ENCODE measurements at regions of chr5 and their contacts with region 1.

Region 1: DNA sequence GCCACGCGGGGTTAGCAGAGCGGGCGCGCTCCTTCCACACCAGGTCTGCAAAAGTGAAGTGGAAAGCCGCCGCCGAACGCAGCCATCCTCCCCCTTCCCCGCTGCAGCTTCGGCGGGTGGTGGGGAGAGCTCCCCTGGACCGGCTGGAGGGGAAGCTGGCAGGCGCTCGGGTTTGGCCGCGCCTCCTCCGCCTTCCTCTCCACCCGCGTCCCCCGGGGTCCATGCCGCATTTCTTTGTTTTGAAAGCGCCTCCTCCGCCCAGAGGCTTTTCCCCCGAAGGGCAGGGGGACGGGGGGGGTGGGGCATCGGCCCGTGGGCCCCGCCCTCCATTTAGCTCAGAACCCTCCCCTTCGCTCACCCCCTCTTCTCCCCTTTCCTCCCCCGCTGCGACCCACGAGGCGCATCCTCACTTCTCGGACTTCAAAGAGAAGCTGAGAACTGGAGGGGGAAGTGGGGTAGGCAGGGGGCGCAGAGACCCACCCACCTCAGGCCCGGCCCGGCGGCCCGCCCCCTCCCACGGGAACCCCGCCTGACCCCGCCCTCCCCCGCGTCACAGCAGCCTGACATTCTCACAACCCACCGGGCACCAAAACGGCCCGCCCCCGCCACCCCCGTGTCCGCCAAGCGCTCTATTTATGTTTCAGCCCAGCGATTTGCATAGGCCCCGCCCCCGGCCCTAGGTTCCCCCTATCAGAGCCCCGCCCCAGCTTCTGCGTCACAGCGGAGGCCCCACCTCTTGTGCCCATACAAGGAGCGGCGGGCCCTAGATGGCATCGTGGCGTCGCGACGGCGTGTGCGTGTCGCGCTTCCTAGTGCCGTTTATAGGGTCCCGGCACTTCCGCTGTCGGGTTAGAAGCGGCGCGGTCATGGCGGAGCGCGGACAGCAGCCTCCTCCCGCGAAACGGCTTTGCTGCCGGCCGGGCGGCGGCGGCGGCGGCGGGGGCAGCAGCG is at the start of gene ZSWIM6:
- DNase-seq: peak; percentile 93 to 100
- ATAC-seq: peak; percentile 63 to 74
- H3K4me3 ChIP-seq: peak within 1 kb of the TSS; percentile 95
- H3K27ac ChIP-seq: peak within 1 kb of the TSS; percentile 88 to 95
- H3K4me1 ChIP-seq: peaks cover 42% of the 10 kb centered on the region
- CTCF ChIP-seq: no peak
- EP300 ChIP-seq: no peak
- POLR2A ChIP-seq: peak; percentile 93
- RAD21 ChIP-seq: peak; percentile 1 to 30; a peak in 2 of 5 replicates
- polyA plus RNA-seq, gene ZSWIM6: 18.0 and 20.9 TPM in 2 replicates

Region 2: DNA sequence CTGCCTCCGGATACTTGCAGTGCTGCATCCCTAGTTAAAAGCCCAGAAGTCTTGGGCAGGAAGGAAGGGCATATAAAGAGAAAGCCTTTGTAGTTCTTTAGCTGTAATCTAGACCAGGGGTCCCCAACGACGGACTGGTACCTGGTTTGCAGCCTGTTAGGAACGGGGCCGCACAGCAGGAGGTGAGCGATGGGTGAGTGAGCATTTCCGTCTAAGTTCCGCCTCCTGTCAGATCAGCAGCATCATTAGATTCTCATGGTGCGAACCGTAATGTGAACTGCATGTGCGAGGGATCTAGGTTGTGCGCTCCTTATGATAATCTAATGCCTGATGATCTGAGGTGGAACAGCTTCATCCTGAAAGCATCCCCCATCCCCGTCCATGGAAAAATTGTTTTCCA is 167.8 kb before region 1 on chr5:
- CTCF ChIA-PET with region 1: interaction called, 12 read pairs
- POLR2A ChIA-PET with region 1: interaction called, 11 read pairs
- DNase-seq: no peak
- ATAC-seq: no peak
- H3K4me3 ChIP-seq: no peak overlapping the region; the same call in 2 of the 3 replicates
- H3K27ac ChIP-seq: peak overlapping the region in 1 of 2 experiments; percentile 95; a peak in 2 of 6 replicates
- H3K4me1 ChIP-seq: peaks cover 16% of the 10 kb centered on the region; the same call in 2 of the 3 replicates
- CTCF ChIP-seq: no peak
- EP300 ChIP-seq: no peak
- POLR2A ChIP-seq: no peak
- RAD21 ChIP-seq: no peak

Region 3: GRCh38 chr5:61301341-61302199 is 30.1 kb before region 1 on chr5:
- CTCF ChIA-PET with region 1: interaction called, 73 read pairs
- POLR2A ChIA-PET with region 1: interaction called, 124 read pairs
- DNase-seq: peak; percentile 90 to 96
- ATAC-seq: peak; percentile 84 to 87
- H3K4me3 ChIP-seq: peak overlapping the region; percentile 42
- H3K27ac ChIP-seq: peak overlapping the region; percentile 77 to 88
- H3K4me1 ChIP-seq: peaks cover 67% of the 10 kb centered on the region
- CTCF ChIP-seq: no peak
- EP300 ChIP-seq: peak; percentile 48 to 71; a peak in 2 of 5 replicates
- POLR2A ChIP-seq: no peak
- RAD21 ChIP-seq: no peak; a peak in 4 of 5 replicates

Region 4: GRCh38 chr5:61313960-61314681 is 17.6 kb before region 1 on chr5:
- CTCF ChIA-PET with region 1: interaction called, 14 read pairs
- POLR2A ChIA-PET with region 1: interaction called, 31 read pairs
- DNase-seq: peak in 1 of 2 experiments; percentile 80
- ATAC-seq: peak; percentile 79 to 82
- H3K4me3 ChIP-seq: no peak overlapping the region
- H3K27ac ChIP-seq: peak overlapping the region; percentile 59 to 68
- H3K4me1 ChIP-seq: peaks cover 49% of the 10 kb centered on the region
- CTCF ChIP-seq: no peak
- EP300 ChIP-seq: peak; percentile 50 to 69; a peak in 1 of 5 replicates
- POLR2A ChIP-seq: no peak
- RAD21 ChIP-seq: 0 out of 5 replicates have a peak, but pooled peaks of 1 of the 2 experiments have one; percentile 22

Region 5: GRCh38 chr5:61402970-61403900 is 71.6 kb after region 1 on chr5:
- CTCF ChIA-PET with region 1: interaction called, 5 read pairs
- POLR2A ChIA-PET with region 1: interaction called, 50 read pairs
- DNase-seq: no peak
- ATAC-seq: no peak
- H3K4me3 ChIP-seq: no peak overlapping the region
- H3K27ac ChIP-seq: peak overlapping the region in 1 of 2 experiments; percentile 40; a peak in 3 of 6 replicates
- H3K4me1 ChIP-seq: peaks cover 84% of the 10 kb centered on the region
- CTCF ChIP-seq: no peak
- EP300 ChIP-seq: no peak
- POLR2A ChIP-seq: no peak
- RAD21 ChIP-seq: no peak

Region 6: DNA sequence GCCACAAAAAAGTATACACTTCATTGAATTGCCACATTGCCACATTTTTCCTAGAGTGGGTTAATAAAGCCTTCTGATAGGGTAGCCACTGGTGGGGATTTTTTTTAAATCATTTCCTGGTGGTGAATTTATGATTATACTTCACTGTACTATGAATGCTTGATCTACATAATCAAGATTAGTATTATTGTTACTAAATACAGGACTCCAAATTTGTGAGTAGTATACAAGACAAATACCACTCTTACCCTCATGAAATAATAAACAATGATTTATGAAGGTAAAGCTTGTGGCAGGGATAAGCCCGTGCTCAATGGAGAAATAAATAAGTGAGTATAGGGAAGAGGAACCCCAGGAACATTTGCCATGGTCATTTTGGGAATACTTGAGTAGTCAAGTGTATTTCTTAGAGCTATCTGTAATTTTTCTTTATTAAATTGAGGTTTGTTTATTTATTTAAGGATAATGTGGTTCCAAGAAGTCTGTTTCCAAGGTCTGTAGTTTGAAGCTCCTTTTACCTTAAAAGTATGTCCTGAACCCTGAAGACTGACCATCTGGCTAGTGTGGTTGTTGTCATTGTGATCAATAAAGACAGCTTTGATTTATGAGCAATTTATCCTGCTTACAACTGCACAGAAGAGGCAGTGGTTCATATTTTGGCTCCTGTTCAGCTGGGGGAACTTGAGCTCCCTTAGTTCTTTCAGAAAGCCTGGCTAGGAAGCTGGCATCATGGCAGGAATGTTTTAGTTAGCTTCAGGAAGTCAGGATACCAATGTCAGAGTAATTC is 119.0 kb after region 1 on chr5:
- CTCF ChIA-PET with region 1: interaction called, 3 read pairs
- POLR2A ChIA-PET with region 1: interaction called, 11 read pairs
- DNase-seq: peak in 1 of 2 experiments; percentile 57
- ATAC-seq: peak; percentile 62 to 80
- H3K4me3 ChIP-seq: 0 out of 3 replicates have a peak overlapping the region, but pooled peaks have one; percentile 9
- H3K27ac ChIP-seq: peak overlapping the region; percentile 75 to 90
- H3K4me1 ChIP-seq: peaks cover 44% of the 10 kb centered on the region
- CTCF ChIP-seq: no peak
- EP300 ChIP-seq: no peak
- POLR2A ChIP-seq: no peak
- RAD21 ChIP-seq: no peak

Region 7: GRCh38 chr5:61559146-61559545 is 227.5 kb after region 1 on chr5:
- CTCF ChIA-PET with region 1: no interaction called
- POLR2A ChIA-PET with region 1: no interaction called
- DNase-seq: no peak
- ATAC-seq: no peak
- H3K4me3 ChIP-seq: no peak overlapping the region
- H3K27ac ChIP-seq: no peak overlapping the region
- H3K4me1 ChIP-seq: peaks cover 6% of the 10 kb centered on the region; the same call in 2 of the 3 replicates
- CTCF ChIP-seq: no peak
- EP300 ChIP-seq: no peak
- POLR2A ChIP-seq: no peak
- RAD21 ChIP-seq: no peak

Region 8: DNA sequence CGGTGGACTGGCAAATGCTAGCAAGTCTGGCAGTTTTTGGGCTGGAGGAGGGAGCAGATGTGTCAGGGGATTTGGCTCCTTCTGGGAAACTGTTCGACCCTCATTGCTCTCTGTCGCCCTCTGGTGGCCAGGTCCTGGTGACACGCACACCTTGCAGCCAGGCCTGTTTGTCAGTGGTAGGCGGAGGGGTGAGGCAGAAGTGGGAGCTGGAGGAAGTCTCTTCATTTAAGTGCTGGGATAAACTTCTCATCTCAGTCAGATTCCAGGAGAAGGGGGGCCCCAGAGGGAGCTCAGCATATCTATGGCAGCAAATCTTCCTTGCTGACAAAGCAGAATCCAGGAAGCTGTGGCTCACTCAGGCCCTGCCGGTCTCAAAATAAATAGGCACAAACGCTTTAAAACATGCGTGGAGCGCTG is 326.9 kb after region 1 on chr5:
- CTCF ChIA-PET with region 1: interaction called, 14 read pairs
- POLR2A ChIA-PET with region 1: interaction called, 3 read pairs
- DNase-seq: peak; percentile 77 to 79
- ATAC-seq: peak; percentile 83 to 96
- H3K4me3 ChIP-seq: no peak overlapping the region
- H3K27ac ChIP-seq: peak overlapping the region; percentile 42 to 52; a peak in 3 of 6 replicates
- H3K4me1 ChIP-seq: peaks cover 10% of the 10 kb centered on the region
- CTCF ChIP-seq: peak; percentile 89
- EP300 ChIP-seq: no peak
- POLR2A ChIP-seq: no peak
- RAD21 ChIP-seq: peak; percentile 91 to 93

Measured in A549 (cell line).